ENCODE measurements at regions of chr17 and their contacts with region 1.

Region 1: DNA sequence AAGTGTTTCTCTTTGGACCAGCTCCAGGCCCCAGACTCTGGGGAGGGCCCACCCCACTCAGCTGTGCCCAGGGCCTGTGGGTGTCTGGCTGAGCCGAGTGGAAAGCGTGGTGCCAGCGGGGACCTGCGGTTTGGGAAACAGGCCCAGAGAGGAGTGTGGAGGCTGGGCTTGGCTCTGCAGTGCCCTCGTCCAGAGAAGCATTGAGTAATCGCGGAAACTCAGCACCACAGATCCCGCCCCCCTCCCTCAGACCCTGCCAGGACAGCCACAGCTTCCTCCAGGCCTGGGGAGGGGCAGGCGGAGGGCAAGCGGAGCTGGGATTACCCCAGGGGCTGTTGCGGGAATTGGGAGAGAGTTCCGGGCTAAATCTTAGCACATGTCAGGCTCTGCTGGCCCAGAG is 14.6 kb upstream of the PITPNA start:
- DNase-seq: peak; percentile 70
- H3K4me3 ChIP-seq: no peak overlapping the region
- H3K27ac ChIP-seq: peak overlapping the region; percentile 70 to 83
- H3K4me1 ChIP-seq: peaks cover 30% of the 10 kb centered on the region
- H3K27me3 ChIP-seq: no peaks in the 10 kb centered on the region
- CTCF ChIP-seq: no peak
- POLR2A ChIP-seq: no peak

Region 2: DNA sequence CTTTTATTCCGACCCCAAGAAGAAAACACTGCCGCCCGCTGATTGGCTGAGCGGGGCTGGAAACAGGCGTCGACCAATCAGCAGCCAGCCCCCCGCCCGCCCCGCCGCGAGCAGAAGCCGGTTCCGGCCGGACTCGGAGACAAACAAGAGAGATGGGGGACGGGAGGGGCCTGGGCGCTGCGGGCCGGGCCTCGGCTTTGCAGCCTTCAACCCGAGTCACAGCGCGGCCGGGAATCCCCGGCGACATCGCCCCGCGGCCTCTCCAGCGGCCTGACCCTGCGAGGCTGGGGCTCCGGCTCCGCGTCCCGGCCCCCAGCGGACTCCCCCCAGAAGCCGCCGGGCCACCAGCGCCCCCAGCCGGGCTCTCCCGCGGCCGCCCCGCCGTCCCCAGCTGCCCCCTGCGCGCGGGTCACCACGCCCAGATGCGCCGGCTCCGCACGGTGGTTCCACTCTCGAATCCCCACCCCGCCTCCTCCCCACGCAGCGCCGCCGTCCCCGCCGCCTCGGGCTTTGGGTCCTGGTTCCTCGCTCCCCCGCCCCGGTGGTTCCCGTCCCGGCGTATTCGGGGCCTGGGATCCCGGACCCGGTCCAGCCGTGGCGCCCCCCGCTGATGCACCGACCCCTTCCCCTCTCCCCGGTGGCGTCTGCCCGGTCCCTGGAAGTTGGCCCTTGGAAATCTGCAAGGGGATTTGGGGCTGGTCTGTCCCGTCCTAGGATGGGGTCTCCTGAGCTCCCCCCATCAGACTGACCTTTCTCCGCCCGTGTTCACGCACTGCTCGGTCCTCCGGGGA is 51.9 kb after region 1 on chr17:
- intact Hi-C with region 1: loop called (anchors 5 kb)
- DNase-seq: peak; percentile 97
- H3K4me3 ChIP-seq: peak overlapping the region; percentile 71 to 72
- H3K27ac ChIP-seq: peak overlapping the region; percentile 83 to 93
- H3K4me1 ChIP-seq: peaks cover 28% of the 10 kb centered on the region
- H3K27me3 ChIP-seq: no peaks in the 10 kb centered on the region
- CTCF ChIP-seq: peak; percentile 13 to 29 (median 16)
- POLR2A ChIP-seq: no peak

Region 3: GRCh38 chr17:1648963-1649843 is 72.0 kb after region 1 on chr17:
- intact Hi-C with region 1: loop called (anchors 5 kb)
- DNase-seq: peak; percentile 96
- H3K4me3 ChIP-seq: peak overlapping the region; percentile 70 to 72
- H3K27ac ChIP-seq: peak overlapping the region; percentile 78 to 94
- H3K4me1 ChIP-seq: peaks cover 21% of the 10 kb centered on the region
- H3K27me3 ChIP-seq: no peaks in the 10 kb centered on the region
- CTCF ChIP-seq: peak in 2 of 3 experiments; percentile 94 to 96
- POLR2A ChIP-seq: no peak

Measured in testis (tissue), 5 donors.